Right cardiac atrium (tissue), 5 donors: ENCODE measurements at regions of chr4 and their contacts with region 1.

Region 1: DNA sequence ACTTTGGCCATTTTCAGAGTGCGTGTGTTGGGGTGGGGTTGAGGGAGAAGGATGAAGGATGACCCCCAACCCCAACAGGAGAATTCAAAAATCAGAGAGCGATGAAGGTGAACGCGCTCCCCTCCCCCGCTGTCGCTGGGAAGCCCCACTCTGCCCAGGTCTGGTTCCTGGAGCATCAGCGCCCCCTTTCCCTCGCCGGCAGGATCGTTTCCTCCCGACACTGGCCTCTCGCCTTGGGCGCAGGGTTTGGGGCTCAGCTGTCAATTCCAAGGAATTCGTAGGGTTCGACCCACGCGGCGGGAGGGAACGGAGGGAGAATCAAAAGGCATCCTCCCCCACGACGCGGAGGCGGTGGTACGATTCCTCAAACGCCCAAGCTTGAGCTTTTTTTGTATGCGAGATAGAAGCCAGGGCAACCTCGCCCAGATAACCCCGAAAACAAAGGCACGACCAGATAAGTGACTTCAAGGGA is 1.0 kb upstream of the PDGFRA start:
- DNase-seq: peak; percentile 79 to 92 (median 91)
- ATAC-seq: peak; percentile 64 to 73
- H3K4me3 ChIP-seq: peak overlapping the region; percentile 53
- H3K27ac ChIP-seq: peak overlapping the region; percentile 24
- H3K4me1 ChIP-seq: peaks cover 7% of the 10 kb centered on the region
- H3K27me3 ChIP-seq: no peaks in the 10 kb centered on the region

Region 2: DNA sequence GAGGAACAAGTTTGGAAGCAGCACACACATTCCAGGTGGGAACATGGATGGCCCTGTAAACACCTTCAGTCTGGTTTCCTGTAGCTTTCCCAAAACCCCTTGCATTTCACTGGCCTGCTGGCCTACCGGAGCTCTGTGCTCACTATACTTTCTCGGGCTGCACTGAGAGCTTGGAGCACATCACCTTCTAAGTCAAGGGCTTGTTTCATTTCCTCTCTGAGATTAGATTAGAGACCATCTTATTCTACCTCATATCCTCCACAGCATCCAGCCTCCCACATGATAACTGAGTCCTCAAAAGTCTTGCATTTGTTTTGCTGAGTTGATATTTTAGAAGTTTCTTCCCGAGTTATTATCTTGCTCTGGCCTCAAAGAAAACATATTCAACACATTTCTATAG is 1218.3 kb before region 1 on chr4:
- intact Hi-C with region 1: loop called in 3 of 4 experiments (anchors 5 to 10 kb)
- DNase-seq: no peak
- ATAC-seq: no peak
- H3K4me3 ChIP-seq: no peak overlapping the region
- H3K27ac ChIP-seq: no peak overlapping the region
- H3K4me1 ChIP-seq: peaks cover 3% of the 10 kb centered on the region
- H3K27me3 ChIP-seq: no peaks in the 10 kb centered on the region

Region 3: GRCh38 chr4:53196882-53197771 is 1031.0 kb before region 1 on chr4:
- intact Hi-C with region 1: loop called (anchors 5 to 10 kb)
- DNase-seq: peak in 1 of 3 donors; percentile 9
- ATAC-seq: peak; percentile 61 to 77
- H3K4me3 ChIP-seq: no peak overlapping the region
- H3K27ac ChIP-seq: no peak overlapping the region
- H3K4me1 ChIP-seq: peaks cover 1% of the 10 kb centered on the region
- H3K27me3 ChIP-seq: no peaks in the 10 kb centered on the region

Region 4: GRCh38 chr4:53702334-53703266 is 525.5 kb before region 1 on chr4:
- intact Hi-C with region 1: loop called in 3 of 4 experiments (anchors 5 to 10 kb)
- DNase-seq: peak; percentile 90 to 96 (median 95)
- ATAC-seq: peak; percentile 97 to 98
- H3K4me3 ChIP-seq: peak overlapping the region; percentile 22
- H3K27ac ChIP-seq: peak overlapping the region; percentile 84
- H3K4me1 ChIP-seq: no peaks in the 10 kb centered on the region
- H3K27me3 ChIP-seq: no peaks in the 10 kb centered on the region

Region 5: GRCh38 chr4:53908661-53909078 is 319.4 kb before region 1 on chr4:
- intact Hi-C with region 1: loop called in 3 of 4 experiments (anchors 5 to 10 kb)
- DNase-seq: peak in 1 of 3 donors; percentile 28
- ATAC-seq: peak; percentile 94 to 95
- H3K4me3 ChIP-seq: peak overlapping the region; percentile 34
- H3K27ac ChIP-seq: no peak overlapping the region
- H3K4me1 ChIP-seq: peaks cover 3% of the 10 kb centered on the region
- H3K27me3 ChIP-seq: no peaks in the 10 kb centered on the region